Common myeloid progenitor, CD34-positive (primary cell): ENCODE measurements at regions of chr11 and their contacts with region 1.

Region 1: DNA sequence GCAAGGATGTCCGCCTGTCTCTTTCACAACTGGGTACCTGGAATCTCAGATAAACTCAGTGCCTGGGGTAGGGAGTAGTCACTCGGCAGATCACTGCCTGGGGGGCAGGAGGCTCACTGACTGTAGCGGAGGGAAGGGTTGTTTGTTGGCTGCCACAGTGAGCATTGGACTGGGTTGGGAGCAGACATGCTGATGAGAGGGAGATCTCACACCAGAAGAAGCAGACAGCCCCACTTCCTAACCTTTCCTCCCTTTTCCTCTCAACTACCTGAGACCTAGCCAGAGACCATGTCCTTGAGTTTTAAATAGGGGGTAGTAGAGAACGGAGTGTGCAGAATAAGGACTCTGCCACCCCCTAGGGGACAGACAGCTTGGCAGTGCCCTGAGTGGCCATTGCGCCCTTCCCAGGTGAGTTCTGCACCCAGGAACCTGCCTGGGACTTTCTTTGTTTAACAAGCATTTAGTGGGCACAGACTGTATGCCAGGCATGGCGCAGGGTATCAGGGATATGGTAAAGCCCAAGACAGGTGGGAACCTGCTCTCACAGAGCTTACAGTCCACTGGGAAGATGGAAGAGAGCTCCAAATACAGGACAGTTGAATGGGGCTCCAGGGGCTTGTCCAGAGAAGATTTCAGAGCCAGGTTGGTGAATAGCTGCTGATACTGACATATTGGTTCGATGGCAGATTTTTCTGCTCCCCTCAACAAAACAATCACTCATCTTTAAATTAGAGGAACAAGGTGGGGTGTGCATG is 115.7 kb upstream of the NNMT start:
- DNase-seq: peak; percentile 50 to 71 (median 67)
- H3K4me3 ChIP-seq: no peak overlapping the region
- H3K27ac ChIP-seq: no peak overlapping the region
- H3K4me1 ChIP-seq: peaks cover 13 to 36% (median 21%) of the 10 kb centered on the region in 4 experiments
- H3K27me3 ChIP-seq: no peaks in the 10 kb centered on the region

Region 2: DNA sequence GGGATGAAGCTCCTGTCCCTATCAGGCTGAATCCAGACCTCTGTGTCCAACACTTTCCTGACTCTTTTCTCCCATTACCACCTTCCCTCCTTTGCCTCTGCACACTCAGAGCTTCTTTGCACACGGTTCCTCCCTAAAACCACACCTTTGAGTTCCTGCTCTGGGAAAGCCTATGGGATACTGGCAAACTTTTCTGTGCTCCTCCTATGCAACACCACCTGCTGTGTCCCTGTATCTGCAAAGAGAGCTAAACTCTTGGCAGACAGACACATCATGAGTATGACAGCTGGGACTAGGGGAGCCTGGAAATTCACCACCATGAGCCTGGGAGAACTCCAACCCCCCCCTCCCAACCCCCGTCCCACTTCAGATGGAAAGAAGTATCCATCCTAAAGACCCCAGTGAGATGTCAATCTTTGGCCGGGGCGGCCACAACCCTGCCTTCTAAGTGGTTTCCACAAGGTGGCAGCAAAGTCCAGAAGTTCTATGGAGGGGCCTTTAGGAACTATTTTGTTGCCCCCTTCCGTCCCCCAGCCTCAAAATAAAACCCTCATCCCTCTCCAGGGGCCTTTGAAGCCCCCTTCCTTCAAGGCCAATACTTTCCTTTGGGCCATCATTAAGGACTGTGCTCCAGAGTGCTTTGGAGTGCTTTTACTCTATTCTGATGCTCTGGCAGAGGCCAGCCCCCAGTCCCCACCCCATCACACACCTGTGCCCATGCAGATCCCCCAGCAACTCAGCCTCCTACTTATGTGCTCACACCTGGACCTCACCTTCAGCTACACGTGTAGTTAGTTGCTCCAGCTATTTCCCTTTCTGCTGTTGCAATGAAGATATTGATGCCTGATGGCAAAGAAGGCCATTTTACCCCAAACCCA is 186.2 kb before region 1 on chr11:
- CTCF ChIA-PET with region 1: interaction called, 42 read pairs
- POLR2A ChIA-PET with region 1: no interaction called
- DNase-seq: peak; percentile 10 to 40 (median 23)
- H3K4me3 ChIP-seq: no peak overlapping the region
- H3K27ac ChIP-seq: no peak overlapping the region
- H3K4me1 ChIP-seq: no peaks in the 10 kb centered on the region
- H3K27me3 ChIP-seq: peaks cover 0 to 29% (median 6%) of the 10 kb centered on the region in 5 experiments

Region 3: DNA sequence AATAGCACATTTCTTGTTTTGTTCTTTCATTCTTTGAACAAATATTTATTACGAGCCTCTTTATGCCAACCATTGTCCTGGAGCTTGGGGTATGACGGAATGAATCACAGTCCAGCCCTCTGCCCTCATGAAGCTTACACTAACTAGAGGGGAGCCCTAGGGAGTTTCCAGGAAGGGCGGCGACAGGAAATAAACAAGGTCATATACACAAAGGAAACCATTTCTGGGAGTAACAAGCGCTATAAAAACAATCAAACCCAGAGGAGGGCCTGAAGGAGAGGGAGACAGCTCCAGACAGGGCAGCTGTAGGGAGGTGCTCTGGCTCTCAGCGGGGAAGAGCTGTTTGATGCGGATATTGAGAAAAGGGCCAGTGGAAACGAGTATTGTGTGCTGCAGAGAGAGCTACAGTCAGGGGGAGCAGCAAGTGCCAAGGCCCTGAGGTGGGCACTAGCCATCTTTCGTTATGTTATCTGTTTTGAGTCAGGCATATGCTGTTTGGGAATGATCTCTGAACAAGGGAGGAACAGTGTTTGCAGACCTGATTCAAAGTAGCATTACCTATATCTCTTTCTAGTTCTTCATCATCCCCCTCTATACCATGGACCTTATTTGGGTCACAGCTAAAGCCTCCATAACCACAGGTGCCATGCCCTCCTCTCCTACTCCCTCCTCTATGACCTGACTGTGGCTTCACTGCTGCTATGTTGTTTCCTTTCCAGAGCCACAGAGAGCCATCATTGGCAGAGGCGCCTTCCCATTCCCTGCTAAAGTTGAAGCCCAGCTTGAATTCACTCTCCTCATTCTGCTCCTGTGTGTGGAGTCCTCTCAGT is 136.2 kb before region 1 on chr11:
- CTCF ChIA-PET with region 1: interaction called, 103 read pairs
- POLR2A ChIA-PET with region 1: no interaction called
- DNase-seq: no peak
- H3K4me3 ChIP-seq: no peak overlapping the region
- H3K27ac ChIP-seq: no peak overlapping the region
- H3K4me1 ChIP-seq: peaks cover 0 to 2% (median 0%) of the 10 kb centered on the region in 4 experiments
- H3K27me3 ChIP-seq: no peaks in the 10 kb centered on the region

Region 4: DNA sequence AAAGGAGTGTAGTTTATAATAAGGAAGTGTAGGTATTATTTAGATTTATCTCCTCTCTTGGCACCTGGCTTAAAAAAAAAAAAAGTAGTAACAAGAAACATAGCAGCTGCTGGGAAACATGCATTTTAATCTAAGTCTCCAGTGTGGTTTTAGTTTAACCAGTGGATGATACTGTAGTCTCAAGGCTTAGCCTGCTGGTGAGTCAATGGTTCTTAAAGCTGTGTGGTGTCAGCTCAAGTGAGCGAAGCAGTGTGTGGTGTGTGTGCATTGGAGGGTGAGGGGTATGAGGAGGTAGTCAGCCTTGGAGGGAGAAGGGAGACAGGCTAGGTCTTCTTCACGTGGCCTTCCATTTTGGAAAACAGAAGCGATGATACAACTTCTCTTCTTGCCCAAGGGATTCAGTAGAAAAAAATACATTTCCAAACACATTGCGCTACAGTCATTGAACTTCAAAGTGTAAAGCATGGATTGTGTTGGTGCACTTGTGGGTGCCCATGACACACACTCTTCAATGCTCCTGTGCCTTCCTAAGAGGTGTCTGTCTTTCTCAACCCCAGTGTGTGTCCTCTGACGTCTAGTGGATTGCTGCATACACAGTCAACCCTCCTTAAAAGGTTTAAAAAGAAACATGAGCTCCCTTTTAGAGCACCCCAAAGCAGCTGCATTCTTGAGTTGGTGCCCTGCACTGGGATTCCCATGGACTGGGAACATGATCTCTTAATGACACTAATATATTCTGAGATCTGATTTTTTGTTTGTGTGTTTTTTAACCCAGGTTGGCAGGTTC is 80.9 kb before region 1 on chr11:
- CTCF ChIA-PET with region 1: interaction called, 10 read pairs
- POLR2A ChIA-PET with region 1: no interaction called
- DNase-seq: peak in 2 of 3 donors; percentile 71 to 85
- H3K4me3 ChIP-seq: no peak overlapping the region
- H3K27ac ChIP-seq: no peak overlapping the region
- H3K4me1 ChIP-seq: peaks cover 19 to 65% (median 40%) of the 10 kb centered on the region in 4 experiments
- H3K27me3 ChIP-seq: no peaks in the 10 kb centered on the region

Region 5: DNA sequence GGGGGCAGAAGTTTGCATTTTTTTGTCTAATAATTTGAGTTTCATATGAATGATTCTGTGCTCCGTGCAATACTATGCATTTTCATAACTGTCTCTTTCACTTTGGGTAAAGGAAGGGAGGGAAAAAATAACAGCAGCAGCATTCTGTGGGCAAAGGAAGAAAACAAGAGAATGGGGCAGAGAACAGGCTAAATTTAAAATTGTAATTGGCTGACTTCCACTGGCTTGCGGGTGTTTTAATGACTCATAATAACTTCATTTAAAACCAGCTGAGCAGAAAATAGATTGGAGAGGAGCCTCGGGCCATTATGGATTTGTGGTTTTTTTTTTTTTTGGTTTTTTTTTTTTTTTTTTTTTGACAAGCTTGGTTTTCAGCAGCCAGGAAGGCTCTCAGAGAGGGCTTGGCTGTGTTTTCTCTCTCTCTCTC is 13.6 kb before region 1 on chr11:
- CTCF ChIA-PET with region 1: interaction called, 114 read pairs
- POLR2A ChIA-PET with region 1: interaction called, 6 read pairs
- DNase-seq: peak; percentile 72 to 89 (median 88)
- H3K4me3 ChIP-seq: peak overlapping the region in 3 of 7 experiments; percentile 28 to 64 (median 58)
- H3K27ac ChIP-seq: no peak overlapping the region
- H3K4me1 ChIP-seq: peaks cover 5 to 82% (median 71%) of the 10 kb centered on the region in 4 experiments
- H3K27me3 ChIP-seq: no peaks in the 10 kb centered on the region

Region 6: GRCh38 chr11:114219559-114220349 is 39.3 kb after region 1 on chr11:
- CTCF ChIA-PET with region 1: interaction called, 13 read pairs
- POLR2A ChIA-PET with region 1: no interaction called
- DNase-seq: no peak
- H3K4me3 ChIP-seq: no peak overlapping the region
- H3K27ac ChIP-seq: no peak overlapping the region
- H3K4me1 ChIP-seq: peaks cover 3 to 54% (median 48%) of the 10 kb centered on the region in 4 experiments
- H3K27me3 ChIP-seq: no peaks in the 10 kb centered on the region

Region 7: GRCh38 chr11:115180272-115180671 is 999.8 kb after region 1 on chr11:
- CTCF ChIA-PET with region 1: no interaction called
- POLR2A ChIA-PET with region 1: no interaction called
- DNase-seq: no peak
- H3K4me3 ChIP-seq: no peak overlapping the region
- H3K27ac ChIP-seq: no peak overlapping the region
- H3K4me1 ChIP-seq: no peaks in the 10 kb centered on the region
- H3K27me3 ChIP-seq: no peaks in the 10 kb centered on the region